SK-N-SH (cell line): ENCODE measurements at regions of chr10 and their contacts with region 1.

Region 1: GRCh38 chr10:128011175-128011979 is 104.5 kb downstream of the PTPRE start:
- DNase-seq: peak; percentile 95
- H3K4me3 ChIP-seq: peak overlapping the region in 1 of 2 experiments; percentile 22; a peak in 2 of 4 replicates
- H3K27ac ChIP-seq: no peak overlapping the region
- H3K4me1 ChIP-seq: peaks cover 0 to 7% of the 10 kb centered on the region in 2 experiments; a peak in 1 of 4 replicates
- H3K27me3 ChIP-seq: no peaks in the 10 kb centered on the region
- CTCF ChIP-seq: peak; percentile 96
- EP300 ChIP-seq: no peak
- RAD21 ChIP-seq: peak; percentile 97

Region 2: GRCh38 chr10:127836966-127837365 is 174.4 kb before region 1 on chr10:
- CTCF ChIA-PET with region 1: no interaction called
- POLR2A ChIA-PET with region 1: no interaction called
- DNase-seq: no peak
- H3K4me3 ChIP-seq: no peak overlapping the region
- H3K27ac ChIP-seq: no peak overlapping the region
- H3K4me1 ChIP-seq: no peaks in the 10 kb centered on the region; a peak in 1 of 4 replicates
- H3K27me3 ChIP-seq: no peaks in the 10 kb centered on the region; the same call in 1 of the 2 replicates
- CTCF ChIP-seq: no peak
- EP300 ChIP-seq: no peak
- RAD21 ChIP-seq: no peak

Region 3: GRCh38 chr10:127892743-127893142 is 118.6 kb before region 1 on chr10 and contains the start of gene CLRN3:
- CTCF ChIA-PET with region 1: interaction called, 13 read pairs
- POLR2A ChIA-PET with region 1: no interaction called
- DNase-seq: no peak
- H3K4me3 ChIP-seq: no peak within 1 kb of the TSS
- H3K27ac ChIP-seq: no peak within 1 kb of the TSS
- H3K4me1 ChIP-seq: peaks cover 5 to 6% of the 10 kb centered on the region in 2 experiments; a peak in 2 of 4 replicates
- H3K27me3 ChIP-seq: no peaks in the 10 kb centered on the region
- CTCF ChIP-seq: no peak
- EP300 ChIP-seq: no peak
- RAD21 ChIP-seq: no peak
- polyA plus RNA-seq, gene CLRN3: 0.08 and 0.25 TPM in 2 replicates

Region 4: GRCh38 chr10:127919418-127920271 is 91.7 kb before region 1 on chr10:
- CTCF ChIA-PET with region 1: interaction called, 389 read pairs
- POLR2A ChIA-PET with region 1: no interaction called
- DNase-seq: peak; percentile 64
- H3K4me3 ChIP-seq: no peak overlapping the region
- H3K27ac ChIP-seq: peak overlapping the region; percentile 40 to 58; a peak in 3 of 4 replicates
- H3K4me1 ChIP-seq: peaks cover 22 to 35% of the 10 kb centered on the region in 2 experiments; a peak in 3 of 4 replicates
- H3K27me3 ChIP-seq: no peaks in the 10 kb centered on the region
- CTCF ChIP-seq: peak; percentile 46
- EP300 ChIP-seq: no peak
- RAD21 ChIP-seq: no peak

Region 5: GRCh38 chr10:127977357-127978009 is 33.9 kb before region 1 on chr10:
- CTCF ChIA-PET with region 1: interaction called, 45 read pairs
- POLR2A ChIA-PET with region 1: no interaction called
- DNase-seq: peak; percentile 72
- H3K4me3 ChIP-seq: 0 out of 4 replicates have a peak overlapping the region, but pooled peaks of 1 of the 2 experiments have one; percentile 28
- H3K27ac ChIP-seq: peak overlapping the region; percentile 72 to 82
- H3K4me1 ChIP-seq: peaks cover 22 to 28% of the 10 kb centered on the region in 2 experiments; a peak in 3 of 4 replicates
- H3K27me3 ChIP-seq: no peaks in the 10 kb centered on the region
- CTCF ChIP-seq: no peak
- EP300 ChIP-seq: peak; percentile 45 to 52; a peak in 2 of 4 replicates
- RAD21 ChIP-seq: no peak

Region 6: DNA sequence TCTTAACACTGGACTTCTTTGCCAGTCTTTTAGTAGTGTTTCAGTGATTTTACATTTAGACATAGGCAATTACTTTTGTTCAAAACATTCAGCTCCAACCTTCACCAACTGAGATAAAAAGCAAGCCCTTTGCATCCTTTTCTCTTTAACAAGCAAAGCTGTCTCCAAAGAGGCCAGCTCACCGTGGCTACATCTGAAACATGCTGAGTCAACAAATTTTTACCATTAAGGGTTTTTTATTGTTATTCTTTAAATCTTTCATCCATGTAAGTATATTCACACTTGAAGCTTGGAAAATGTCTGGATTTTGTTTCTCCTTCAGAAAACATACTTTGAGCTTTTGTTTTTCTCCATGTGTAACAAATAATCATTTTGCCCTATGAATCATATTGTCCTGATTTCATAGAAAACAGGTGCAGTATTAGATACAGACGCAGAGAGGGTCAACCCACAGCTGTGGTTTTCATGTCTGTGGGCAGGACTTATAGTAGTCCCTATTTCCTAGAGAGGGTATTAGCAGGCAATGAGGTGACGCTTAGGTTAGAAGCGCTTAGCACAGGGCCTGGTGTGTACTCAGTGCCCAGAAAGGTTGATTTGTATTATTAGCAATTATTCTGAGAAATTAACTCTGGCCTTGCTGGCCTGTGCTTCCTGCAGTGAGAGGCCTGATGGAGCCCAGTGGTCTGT is 15.4 kb after region 1 on chr10:
- CTCF ChIA-PET with region 1: interaction called, 29 read pairs
- POLR2A ChIA-PET with region 1: no interaction called
- DNase-seq: no peak
- H3K4me3 ChIP-seq: no peak overlapping the region
- H3K27ac ChIP-seq: no peak overlapping the region
- H3K4me1 ChIP-seq: peaks cover 0 to 6% of the 10 kb centered on the region in 2 experiments; a peak in 2 of 4 replicates
- H3K27me3 ChIP-seq: no peaks in the 10 kb centered on the region
- CTCF ChIP-seq: no peak
- EP300 ChIP-seq: no peak
- RAD21 ChIP-seq: no peak

Region 7: GRCh38 chr10:128069351-128070051 is 58.1 kb after region 1 on chr10:
- CTCF ChIA-PET with region 1: interaction called, 60 read pairs
- POLR2A ChIA-PET with region 1: no interaction called
- DNase-seq: peak; percentile 85
- H3K4me3 ChIP-seq: peak overlapping the region in 1 of 2 experiments; percentile 11; a peak in 1 of 4 replicates
- H3K27ac ChIP-seq: no peak overlapping the region
- H3K4me1 ChIP-seq: no peaks in the 10 kb centered on the region
- H3K27me3 ChIP-seq: no peaks in the 10 kb centered on the region
- CTCF ChIP-seq: peak; percentile 83
- EP300 ChIP-seq: no peak
- RAD21 ChIP-seq: peak; percentile 95

Region 8: GRCh38 chr10:128091636-128092210 is 80.3 kb after region 1 on chr10:
- CTCF ChIA-PET with region 1: no interaction called
- POLR2A ChIA-PET with region 1: no interaction called
- DNase-seq: no peak
- H3K4me3 ChIP-seq: no peak overlapping the region
- H3K27ac ChIP-seq: no peak overlapping the region
- H3K4me1 ChIP-seq: peaks cover 0 to 3% of the 10 kb centered on the region in 2 experiments; a peak in 1 of 4 replicates
- H3K27me3 ChIP-seq: no peaks in the 10 kb centered on the region
- CTCF ChIP-seq: no peak
- EP300 ChIP-seq: no peak
- RAD21 ChIP-seq: no peak

Region 9: DNA sequence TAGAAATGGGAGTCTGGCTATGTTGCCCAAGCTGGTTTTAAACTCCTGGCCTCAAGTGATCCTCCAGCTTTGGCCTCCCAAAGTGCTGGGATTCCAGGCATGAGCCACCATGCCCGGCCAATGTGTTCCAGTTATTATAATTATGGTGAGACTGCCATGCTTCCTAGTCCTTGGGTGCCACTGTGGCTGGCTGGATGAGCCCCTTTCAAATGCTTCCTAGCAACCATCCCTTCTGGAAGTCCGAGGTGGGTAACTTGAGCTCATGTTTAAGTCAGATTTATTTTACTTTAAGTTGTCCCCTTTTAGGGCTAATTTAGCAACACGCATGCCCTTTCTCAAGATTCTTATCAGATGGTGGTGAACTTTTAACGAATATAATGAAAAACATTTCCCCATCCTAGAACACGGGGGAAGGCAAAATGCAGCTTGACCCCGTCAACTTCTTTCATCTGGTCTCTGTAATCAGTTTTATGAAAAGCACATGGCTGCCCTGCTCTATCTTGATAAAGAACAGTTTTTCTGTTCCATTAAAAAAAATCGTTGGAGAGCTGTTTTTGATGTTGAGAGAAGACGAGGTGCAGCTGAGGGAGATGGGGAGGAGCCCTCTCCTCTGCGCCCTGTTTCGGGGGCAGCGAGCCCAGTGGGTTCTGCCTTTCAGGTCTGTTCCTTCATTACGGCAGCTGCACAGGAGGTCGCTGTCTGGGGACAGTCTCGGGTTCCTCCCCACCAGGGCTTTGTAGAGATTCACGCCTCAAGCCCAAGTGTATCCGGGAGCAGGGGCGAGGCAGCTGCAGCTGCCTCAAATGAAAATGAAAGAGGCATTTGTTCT is 175.8 kb after region 1 on chr10:
- CTCF ChIA-PET with region 1: no interaction called
- POLR2A ChIA-PET with region 1: no interaction called
- DNase-seq: peak; percentile 78
- H3K4me3 ChIP-seq: peak overlapping the region in 1 of 2 experiments; percentile 22; a peak in 1 of 4 replicates
- H3K27ac ChIP-seq: peak overlapping the region in 1 of 2 experiments; percentile 98; a peak in 2 of 4 replicates
- H3K4me1 ChIP-seq: peaks cover 0 to 24% of the 10 kb centered on the region in 2 experiments; a peak in 2 of 4 replicates
- H3K27me3 ChIP-seq: no peaks in the 10 kb centered on the region
- CTCF ChIP-seq: no peak
- EP300 ChIP-seq: peak in 1 of 2 experiments; percentile 99; a peak in 2 of 4 replicates
- RAD21 ChIP-seq: 0 out of 2 replicates have a peak, but pooled peaks have one; percentile 14